Activated T-helper 1 cell treated with anti-CD3 and anti-CD28 coated beads, Interleukin-12 subunit alpha, Interleukin-12 subunit beta, Interleukin-2, Interleukin-4 antibody, amounts not matched to agents 30 ng/mL and 10 ng/mL and 1 ng/mL, durations not matched to agents 14 hours and 24 hours and 36 hours (primary cell): ENCODE measurements at regions of chr10 and their contacts with region 1.

Region 1: GRCh38 chr10:22228943-22229801 is 11.4 kb upstream of the EBLN1 start:
- DNase-seq: peak; percentile 77
- H3K4me3 Mint-ChIP-seq: peak overlapping the region; percentile 92
- H3K27ac Mint-ChIP-seq: peak overlapping the region; percentile 98
- H3K4me1 Mint-ChIP-seq: peaks cover 32% of the 10 kb centered on the region
- H3K27me3 Mint-ChIP-seq: peaks cover 11% of the 10 kb centered on the region

Region 2: GRCh38 chr10:21807180-21807579 is 422.0 kb before region 1 on chr10:
- intact Hi-C with region 1: no loop called
- DNase-seq: no peak
- H3K4me3 Mint-ChIP-seq: no peak overlapping the region
- H3K27ac Mint-ChIP-seq: no peak overlapping the region
- H3K4me1 Mint-ChIP-seq: no peaks in the 10 kb centered on the region
- H3K27me3 Mint-ChIP-seq: no peaks in the 10 kb centered on the region

Region 3: GRCh38 chr10:21961847-21962246 is 267.3 kb before region 1 on chr10:
- intact Hi-C with region 1: no loop called
- DNase-seq: no peak
- H3K4me3 Mint-ChIP-seq: no peak overlapping the region
- H3K27ac Mint-ChIP-seq: no peak overlapping the region
- H3K4me1 Mint-ChIP-seq: peaks cover 11% of the 10 kb centered on the region
- H3K27me3 Mint-ChIP-seq: peaks cover 2% of the 10 kb centered on the region

Region 4: GRCh38 chr10:22245567-22245966 is 16.4 kb after region 1 on chr10:
- intact Hi-C with region 1: loop called (anchors 1 kb)
- DNase-seq: no peak
- H3K4me3 Mint-ChIP-seq: no peak overlapping the region
- H3K27ac Mint-ChIP-seq: no peak overlapping the region
- H3K4me1 Mint-ChIP-seq: peaks cover 38% of the 10 kb centered on the region
- H3K27me3 Mint-ChIP-seq: no peaks in the 10 kb centered on the region

Region 5: DNA sequence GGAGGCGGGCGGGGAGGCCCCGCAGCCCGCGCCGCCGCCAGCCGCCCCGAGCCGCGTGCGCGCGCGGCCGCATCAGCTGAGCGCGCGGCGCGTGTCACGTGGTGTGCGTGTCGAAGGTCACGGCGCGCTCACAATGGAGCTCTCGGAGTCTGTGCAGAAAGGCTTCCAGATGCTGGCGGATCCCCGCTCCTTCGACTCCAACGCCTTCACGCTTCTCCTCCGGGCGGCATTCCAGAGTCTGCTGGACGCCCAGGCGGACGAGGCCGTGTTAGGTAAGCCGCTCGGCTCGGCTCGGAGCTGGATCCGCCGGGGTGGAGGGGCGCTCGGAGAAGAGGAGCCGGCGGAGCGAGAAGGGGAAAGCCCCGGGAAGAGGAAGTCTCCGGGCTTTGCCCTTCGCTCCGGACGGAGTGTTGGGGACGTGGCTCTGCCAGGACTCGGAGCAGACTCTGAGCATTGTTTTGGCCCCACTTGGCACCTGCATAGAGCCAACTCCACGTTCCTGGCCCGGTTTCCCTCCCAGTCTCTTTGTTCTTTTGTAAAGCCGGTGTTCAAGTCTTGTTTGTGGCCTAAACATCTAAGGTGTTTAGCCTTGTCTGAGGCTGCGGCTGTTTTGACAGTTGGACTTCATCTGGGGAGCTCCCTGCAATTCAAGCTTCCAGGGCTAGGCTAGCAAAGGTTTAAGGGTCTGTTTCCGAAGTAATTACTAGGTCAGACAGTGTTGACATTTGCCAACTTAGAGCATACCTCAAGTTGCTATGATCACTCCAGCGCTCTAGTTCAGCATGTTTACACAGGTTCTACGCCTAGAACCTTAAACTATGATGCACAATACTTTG is 87.3 kb after region 1 on chr10 and contains the start of gene COMMD3:
- intact Hi-C with region 1: loop called (anchors 1 kb)
- DNase-seq: peak; percentile 77
- H3K4me3 Mint-ChIP-seq: peak within 1 kb of the TSS; percentile 98
- H3K27ac Mint-ChIP-seq: peak within 1 kb of the TSS; percentile 100
- H3K4me1 Mint-ChIP-seq: peaks cover 50% of the 10 kb centered on the region
- H3K27me3 Mint-ChIP-seq: peaks cover 2% of the 10 kb centered on the region
- total RNA-seq, gene COMMD3: 78.7 and 84.4 TPM in 2 replicates